GM12878 (cell line): ENCODE measurements at regions of chr10 and their contacts with region 1.

Region 1: GRCh38 chr10:106705681-106706100 is 458.8 kb downstream of the SORCS1 start:
- DNase-seq: no peak
- ATAC-seq: peak; percentile 94
- H3K4me3 ChIP-seq: no peak overlapping the region
- H3K27ac ChIP-seq: no peak overlapping the region
- H3K4me1 ChIP-seq: no peaks in the 10 kb centered on the region
- H3K27me3 ChIP-seq: no peaks in the 10 kb centered on the region; a peak in 1 of 4 replicates
- CTCF ChIP-seq: peak; percentile 76 to 83 (median 78)
- EP300 ChIP-seq: no peak
- POLR2A ChIP-seq: no peak
- RAD21 ChIP-seq: peak; percentile 86

Region 2: GRCh38 chr10:106609470-106610266 is 96.0 kb before region 1 on chr10:
- CTCF ChIA-PET with region 1: no interaction called
- POLR2A ChIA-PET with region 1: no interaction called
- RAD21 ChIA-PET with region 1: no interaction called
- SMC1A ChIA-PET with region 1: no interaction called
- in situ Hi-C with region 1: no loop called
- intact Hi-C with region 1: no loop called
- DNase-seq: no peak
- ATAC-seq: peak; percentile 58
- H3K4me3 ChIP-seq: no peak overlapping the region
- H3K27ac ChIP-seq: no peak overlapping the region
- H3K4me1 ChIP-seq: no peaks in the 10 kb centered on the region
- H3K27me3 ChIP-seq: no peaks in the 10 kb centered on the region
- CTCF ChIP-seq: 0 out of 6 replicates have a peak, but pooled peaks of 2 of the 3 experiments have one; percentile 14 to 19
- EP300 ChIP-seq: no peak
- POLR2A ChIP-seq: no peak
- RAD21 ChIP-seq: peak; percentile 28; the same call in 1 of the 2 replicates

Region 3: GRCh38 chr10:106625751-106626150 is 79.9 kb before region 1 on chr10:
- CTCF ChIA-PET with region 1: interaction called, 20 read pairs
- POLR2A ChIA-PET with region 1: no interaction called
- RAD21 ChIA-PET with region 1: interaction called, 3 read pairs
- SMC1A ChIA-PET with region 1: interaction called, 9 read pairs
- in situ Hi-C with region 1: no loop called
- intact Hi-C with region 1: no loop called
- DNase-seq: no peak
- ATAC-seq: no peak
- H3K4me3 ChIP-seq: no peak overlapping the region
- H3K27ac ChIP-seq: no peak overlapping the region
- H3K4me1 ChIP-seq: no peaks in the 10 kb centered on the region
- H3K27me3 ChIP-seq: no peaks in the 10 kb centered on the region; a peak in 1 of 4 replicates
- CTCF ChIP-seq: no peak
- EP300 ChIP-seq: no peak
- POLR2A ChIP-seq: no peak
- RAD21 ChIP-seq: no peak

Region 4: DNA sequence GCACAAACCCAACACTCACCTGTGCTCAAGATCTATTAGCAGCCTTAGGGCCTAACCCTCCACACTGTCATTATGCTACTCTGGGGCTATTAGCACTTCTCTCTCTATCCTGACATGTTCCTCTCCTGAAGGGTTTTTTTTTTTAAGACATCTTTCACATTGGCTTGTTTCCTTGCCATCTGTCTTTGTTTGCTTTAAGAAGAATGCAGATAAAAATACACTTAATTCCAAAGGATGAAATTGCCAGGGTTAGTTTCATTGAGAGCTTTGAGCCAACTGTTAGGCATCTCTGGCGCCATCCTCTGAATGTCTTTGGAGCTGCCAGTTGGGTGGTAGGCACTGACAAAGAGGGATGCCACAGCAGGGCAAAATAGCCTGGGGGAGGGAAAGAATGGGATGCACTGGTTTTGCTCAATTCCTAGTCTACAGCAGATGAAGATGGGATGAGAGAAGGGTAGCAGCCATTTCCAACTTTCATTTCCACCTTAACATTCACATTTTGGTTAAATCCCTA is 59.6 kb after region 1 on chr10:
- CTCF ChIA-PET with region 1: interaction called, 10 read pairs
- POLR2A ChIA-PET with region 1: no interaction called
- RAD21 ChIA-PET with region 1: no interaction called
- SMC1A ChIA-PET with region 1: interaction called, 5 read pairs
- in situ Hi-C with region 1: no loop called
- intact Hi-C with region 1: no loop called
- DNase-seq: no peak
- ATAC-seq: no peak
- H3K4me3 ChIP-seq: no peak overlapping the region
- H3K27ac ChIP-seq: no peak overlapping the region
- H3K4me1 ChIP-seq: no peaks in the 10 kb centered on the region
- H3K27me3 ChIP-seq: no peaks in the 10 kb centered on the region
- CTCF ChIP-seq: no peak
- EP300 ChIP-seq: no peak
- POLR2A ChIP-seq: no peak
- RAD21 ChIP-seq: no peak

Region 5: GRCh38 chr10:106836933-106837663 is 131.4 kb after region 1 on chr10:
- CTCF ChIA-PET with region 1: no interaction called
- POLR2A ChIA-PET with region 1: no interaction called
- RAD21 ChIA-PET with region 1: no interaction called
- SMC1A ChIA-PET with region 1: no interaction called
- in situ Hi-C with region 1: no loop called
- intact Hi-C with region 1: no loop called
- DNase-seq: peak; percentile 83
- ATAC-seq: peak; percentile 98
- H3K4me3 ChIP-seq: no peak overlapping the region
- H3K27ac ChIP-seq: no peak overlapping the region
- H3K4me1 ChIP-seq: peaks cover 7% of the 10 kb centered on the region
- H3K27me3 ChIP-seq: no peaks in the 10 kb centered on the region
- CTCF ChIP-seq: no peak
- EP300 ChIP-seq: no peak; a peak in 1 of 4 replicates
- POLR2A ChIP-seq: no peak
- RAD21 ChIP-seq: no peak

Region 6: DNA sequence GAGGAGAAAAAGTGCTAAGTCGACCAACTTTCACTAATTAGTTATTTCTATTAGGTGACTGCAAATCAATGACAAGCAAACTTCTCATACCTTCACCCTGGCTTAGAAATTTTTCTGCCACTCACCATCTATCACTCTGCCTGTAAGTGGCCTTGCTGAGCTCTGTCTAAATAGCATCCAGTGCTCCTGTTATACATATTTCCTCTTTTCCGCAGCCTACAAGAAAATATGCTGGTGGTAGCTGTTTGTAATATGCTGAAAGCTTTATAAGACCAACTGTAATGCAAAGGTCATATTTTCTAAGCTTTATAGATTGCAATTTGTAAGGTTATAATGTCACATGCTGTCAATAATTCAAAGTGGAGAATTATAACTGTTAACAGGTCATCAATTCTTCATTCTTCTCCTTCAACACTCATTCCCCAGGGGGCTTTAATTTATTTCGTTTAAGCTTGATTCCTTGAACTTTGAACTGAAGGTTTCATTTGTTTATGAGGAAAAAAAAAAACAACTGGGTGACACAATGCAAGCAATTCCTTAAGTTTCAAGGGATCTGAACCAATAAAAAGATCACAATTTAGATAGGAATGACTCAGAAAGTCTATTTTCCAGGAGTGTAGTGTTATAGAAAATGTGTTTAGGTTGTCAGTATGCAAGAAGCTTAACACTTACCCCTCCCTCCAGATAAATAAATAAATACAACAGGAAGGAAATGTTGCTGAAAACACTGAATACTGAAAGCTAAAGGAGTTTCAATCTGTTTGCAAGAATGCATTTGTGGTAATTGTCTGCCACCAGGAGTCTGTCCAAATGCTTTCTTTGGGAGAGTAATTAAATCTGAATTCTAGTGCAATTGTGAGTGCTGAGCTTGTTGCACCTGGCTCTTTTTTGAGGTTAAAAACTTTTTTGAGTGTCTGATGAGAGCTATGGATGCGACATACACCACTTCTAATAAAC is 275.1 kb after region 1 on chr10:
- CTCF ChIA-PET with region 1: interaction called, 62 read pairs
- POLR2A ChIA-PET with region 1: no interaction called
- RAD21 ChIA-PET with region 1: interaction called, 27 read pairs
- SMC1A ChIA-PET with region 1: interaction called, 27 read pairs
- in situ Hi-C with region 1: loop called (anchors 10 kb)
- intact Hi-C with region 1: loop called (anchors 2 kb)
- DNase-seq: peak; percentile 33
- ATAC-seq: peak; percentile 82
- H3K4me3 ChIP-seq: no peak overlapping the region
- H3K27ac ChIP-seq: no peak overlapping the region
- H3K4me1 ChIP-seq: 0 out of 2 replicates have a peak, but pooled peaks cover 3% of the 10 kb centered on the region
- H3K27me3 ChIP-seq: no peaks in the 10 kb centered on the region
- CTCF ChIP-seq: peak; percentile 26 to 67 (median 33); a peak in 4 of 6 replicates
- EP300 ChIP-seq: no peak
- POLR2A ChIP-seq: no peak
- RAD21 ChIP-seq: peak; percentile 92

Region 7: DNA sequence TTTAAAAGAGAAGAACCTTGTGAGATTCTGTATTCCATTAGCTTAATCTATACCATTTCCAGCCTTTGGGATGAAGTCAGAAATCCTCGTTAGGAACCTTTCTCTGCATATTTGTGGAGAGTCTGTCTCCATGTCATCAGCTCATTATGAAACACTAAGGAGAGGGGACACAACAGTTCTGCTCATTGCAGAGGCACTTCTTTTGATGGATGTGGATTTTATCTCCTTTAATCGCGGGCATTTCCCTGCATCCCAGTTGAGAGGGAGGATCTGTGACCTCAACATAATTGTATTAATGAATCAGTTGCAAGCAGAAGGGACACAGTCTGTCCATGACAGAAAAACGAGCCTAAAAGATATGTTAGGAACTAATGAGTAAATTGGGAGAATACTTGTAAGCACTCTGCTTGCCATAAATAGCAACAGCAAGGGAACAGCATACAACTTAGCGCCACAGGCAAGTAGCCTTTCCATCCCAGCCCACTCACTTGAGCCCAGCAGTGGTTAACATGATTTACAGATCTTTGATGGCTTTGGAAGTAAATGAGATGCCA is 420.9 kb after region 1 on chr10:
- CTCF ChIA-PET with region 1: no interaction called
- POLR2A ChIA-PET with region 1: no interaction called
- RAD21 ChIA-PET with region 1: no interaction called
- SMC1A ChIA-PET with region 1: no interaction called
- in situ Hi-C with region 1: no loop called
- intact Hi-C with region 1: no loop called
- DNase-seq: no peak
- ATAC-seq: no peak
- H3K4me3 ChIP-seq: no peak overlapping the region
- H3K27ac ChIP-seq: no peak overlapping the region
- H3K4me1 ChIP-seq: no peaks in the 10 kb centered on the region
- H3K27me3 ChIP-seq: no peaks in the 10 kb centered on the region
- CTCF ChIP-seq: no peak
- EP300 ChIP-seq: no peak
- POLR2A ChIP-seq: no peak
- RAD21 ChIP-seq: no peak

Region 8: DNA sequence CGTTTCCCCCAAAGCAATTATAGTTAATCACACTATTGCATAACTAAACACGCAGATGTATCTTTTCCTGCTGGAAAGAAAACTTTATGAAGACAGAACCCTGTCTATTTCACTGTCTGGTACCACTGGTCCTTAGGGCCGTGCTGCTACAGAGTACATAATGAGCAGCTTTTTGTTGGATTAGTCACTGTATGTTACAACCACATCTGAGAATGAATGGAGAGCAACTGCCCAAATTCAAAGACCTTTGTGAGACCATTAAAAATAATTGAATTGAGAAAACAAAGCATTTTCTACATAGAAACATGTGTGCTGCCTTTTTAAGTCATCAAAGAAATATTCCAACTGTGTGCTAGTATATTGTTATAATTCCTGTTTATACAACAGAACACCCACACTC is 570.1 kb after region 1 on chr10:
- CTCF ChIA-PET with region 1: interaction called, 3 read pairs
- POLR2A ChIA-PET with region 1: no interaction called
- RAD21 ChIA-PET with region 1: no interaction called
- SMC1A ChIA-PET with region 1: no interaction called
- in situ Hi-C with region 1: no loop called
- intact Hi-C with region 1: loop called (anchors 10 kb)
- DNase-seq: no peak
- ATAC-seq: no peak
- H3K4me3 ChIP-seq: no peak overlapping the region
- H3K27ac ChIP-seq: no peak overlapping the region
- H3K4me1 ChIP-seq: no peaks in the 10 kb centered on the region
- H3K27me3 ChIP-seq: no peaks in the 10 kb centered on the region
- CTCF ChIP-seq: no peak
- EP300 ChIP-seq: no peak
- POLR2A ChIP-seq: no peak
- RAD21 ChIP-seq: no peak

Region 9: DNA sequence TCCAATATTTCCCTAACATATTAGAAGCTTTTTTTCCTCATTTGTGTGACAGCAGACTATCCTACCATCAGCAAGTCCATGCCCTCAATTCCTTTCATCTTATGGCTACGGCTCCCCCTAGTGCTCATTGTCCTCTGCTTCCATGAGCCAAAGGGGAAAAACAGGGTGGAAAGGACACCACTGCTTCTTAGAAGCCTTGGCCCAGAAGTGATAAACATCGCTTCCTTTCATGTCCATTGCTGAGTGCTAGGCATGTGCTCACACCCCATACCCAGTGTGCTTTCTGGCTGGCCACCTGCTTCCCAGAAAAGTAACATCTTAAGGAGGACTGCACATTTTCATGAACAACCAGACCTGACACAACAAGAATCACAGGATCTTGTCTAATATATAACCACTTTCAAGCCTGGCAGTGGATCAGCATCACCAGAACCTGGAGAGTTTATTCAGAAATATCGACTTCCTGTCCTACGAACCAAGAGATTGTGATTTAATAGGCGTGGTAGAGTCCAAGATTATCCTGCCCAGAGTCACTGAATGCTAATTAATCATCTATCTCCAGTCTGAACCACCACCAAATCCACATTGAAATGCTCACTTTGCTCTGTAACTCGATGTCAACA is 1109.3 kb after region 1 on chr10:
- CTCF ChIA-PET with region 1: interaction called, 4 read pairs
- POLR2A ChIA-PET with region 1: no interaction called
- RAD21 ChIA-PET with region 1: interaction called, 3 read pairs
- SMC1A ChIA-PET with region 1: interaction called, 5 read pairs
- in situ Hi-C with region 1: no loop called
- intact Hi-C with region 1: loop called (anchors 10 kb)
- DNase-seq: peak; percentile 20
- ATAC-seq: peak; percentile 95
- H3K4me3 ChIP-seq: no peak overlapping the region
- H3K27ac ChIP-seq: no peak overlapping the region
- H3K4me1 ChIP-seq: no peaks in the 10 kb centered on the region
- H3K27me3 ChIP-seq: no peaks in the 10 kb centered on the region
- CTCF ChIP-seq: peak; percentile 59 to 81 (median 74)
- EP300 ChIP-seq: no peak
- POLR2A ChIP-seq: no peak
- RAD21 ChIP-seq: peak; percentile 87